ENCODE measurements at regions of chr12 and their contacts with region 1.

Region 1: DNA sequence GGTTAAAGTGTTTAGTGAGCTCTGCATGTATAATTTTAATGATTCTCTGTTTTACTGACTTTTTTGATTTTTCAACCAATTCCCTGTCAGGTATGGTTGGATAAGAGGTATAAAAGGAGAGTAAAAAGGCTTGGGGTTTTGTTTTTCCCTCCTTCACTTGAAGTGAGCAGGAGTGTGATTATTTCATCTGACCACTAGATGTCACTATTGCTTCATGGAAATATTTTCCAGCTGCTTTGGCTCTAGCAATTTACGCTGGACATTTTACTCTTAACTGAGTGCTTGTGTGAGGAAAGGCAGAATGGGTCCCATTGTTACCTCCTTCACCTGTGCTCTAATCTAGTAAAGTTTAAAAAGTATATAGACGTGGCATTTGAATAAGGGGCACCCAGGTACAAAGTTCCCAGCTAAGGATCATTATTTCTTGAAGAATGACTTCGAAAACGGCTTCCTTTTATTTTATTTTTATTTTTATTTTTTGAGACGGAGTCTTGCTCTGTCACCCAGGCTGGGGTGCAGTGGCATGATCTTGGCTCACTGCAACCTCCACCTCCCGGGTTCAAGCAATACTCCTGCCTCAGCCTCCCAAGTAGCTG is 66.5 kb downstream of the TBC1D30 start:
- DNase-seq: peak; percentile 52
- CTCF ChIP-seq: peak; percentile 36

Region 2: DNA sequence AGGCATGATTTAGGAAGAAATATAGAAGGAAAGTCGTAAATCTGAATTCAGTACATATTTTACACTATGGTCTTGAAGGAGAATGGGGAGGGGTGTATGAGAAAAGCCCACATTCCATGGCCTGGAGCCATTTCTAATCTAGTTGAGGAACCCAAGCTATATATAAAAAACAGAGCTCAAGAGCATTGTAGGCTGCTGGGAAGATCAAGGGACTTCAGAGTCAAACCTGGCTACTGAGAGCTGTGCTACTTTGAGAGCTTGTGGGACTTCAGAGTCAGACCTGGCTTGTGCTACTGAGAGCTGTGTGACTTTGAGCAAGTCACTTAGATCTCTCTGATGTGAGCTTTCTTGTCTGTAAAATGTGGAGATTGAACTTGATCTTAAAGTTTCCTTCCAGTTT is 380.3 kb before region 1 on chr12:
- in situ Hi-C with region 1: no loop called
- DNase-seq: no peak
- CTCF ChIP-seq: no peak

Region 3: GRCh38 chr12:64639466-64639865 is 251.5 kb before region 1 on chr12:
- in situ Hi-C with region 1: no loop called
- DNase-seq: no peak
- CTCF ChIP-seq: no peak

Region 4: DNA sequence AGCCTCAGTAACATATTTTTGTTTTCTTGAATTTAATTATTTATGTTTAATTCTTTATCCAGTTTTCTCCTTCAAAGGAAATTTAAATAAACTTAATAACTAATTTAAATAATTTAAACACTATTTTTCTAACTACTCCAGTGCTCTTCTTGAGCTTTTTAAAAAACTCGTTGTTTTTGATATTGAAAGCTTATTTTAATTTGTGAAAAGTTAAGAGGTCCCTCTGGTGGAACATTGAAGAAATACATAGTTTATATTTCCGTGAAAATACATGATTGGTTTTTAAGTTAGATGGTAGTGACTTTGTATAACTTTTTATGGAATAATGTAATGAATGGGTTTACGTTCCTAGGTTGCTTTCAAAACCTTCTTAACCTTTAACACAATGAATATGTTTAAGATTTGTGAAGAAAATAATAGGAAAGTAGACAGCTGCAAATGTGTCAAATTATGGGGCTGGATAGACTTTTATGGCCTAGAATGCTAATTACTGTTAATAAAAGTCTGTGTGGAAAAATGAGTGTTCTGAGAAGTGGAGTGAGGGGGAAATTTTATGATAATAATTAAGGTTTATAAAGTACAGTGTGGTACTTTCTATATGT is 341.6 kb after region 1 on chr12:
- in situ Hi-C with region 1: loop called (anchors 25 kb)
- DNase-seq: peak; percentile 33
- CTCF ChIP-seq: peak; percentile 25

Region 5: DNA sequence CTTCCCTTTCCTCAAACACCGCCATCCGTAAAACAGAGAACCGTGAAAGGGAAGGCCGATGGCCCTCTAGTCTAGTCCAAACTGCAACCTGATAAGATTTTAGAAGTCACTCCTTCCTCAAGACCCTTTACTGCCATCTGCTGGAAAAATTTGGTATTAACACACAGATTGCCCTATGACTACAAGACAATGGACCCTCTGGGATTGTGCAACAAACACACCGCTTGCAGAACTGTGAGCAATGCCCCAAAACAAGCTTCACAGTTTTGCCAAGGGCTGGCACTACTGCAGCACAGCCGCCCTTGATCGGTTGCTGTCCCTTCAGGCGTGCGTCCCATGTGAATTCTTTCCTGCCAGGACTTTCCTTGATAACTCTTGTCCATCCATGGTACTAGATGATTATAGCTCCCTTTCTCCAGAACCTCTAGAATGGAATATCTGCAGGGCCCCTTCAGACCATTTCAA is 1216.5 kb after region 1 on chr12:
- in situ Hi-C with region 1: loop called (anchors 25 kb)
- DNase-seq: peak; percentile 70
- CTCF ChIP-seq: peak; percentile 85